A549 (cell line): ENCODE measurements at regions of chr1 and their contacts with region 1.

Region 1: DNA sequence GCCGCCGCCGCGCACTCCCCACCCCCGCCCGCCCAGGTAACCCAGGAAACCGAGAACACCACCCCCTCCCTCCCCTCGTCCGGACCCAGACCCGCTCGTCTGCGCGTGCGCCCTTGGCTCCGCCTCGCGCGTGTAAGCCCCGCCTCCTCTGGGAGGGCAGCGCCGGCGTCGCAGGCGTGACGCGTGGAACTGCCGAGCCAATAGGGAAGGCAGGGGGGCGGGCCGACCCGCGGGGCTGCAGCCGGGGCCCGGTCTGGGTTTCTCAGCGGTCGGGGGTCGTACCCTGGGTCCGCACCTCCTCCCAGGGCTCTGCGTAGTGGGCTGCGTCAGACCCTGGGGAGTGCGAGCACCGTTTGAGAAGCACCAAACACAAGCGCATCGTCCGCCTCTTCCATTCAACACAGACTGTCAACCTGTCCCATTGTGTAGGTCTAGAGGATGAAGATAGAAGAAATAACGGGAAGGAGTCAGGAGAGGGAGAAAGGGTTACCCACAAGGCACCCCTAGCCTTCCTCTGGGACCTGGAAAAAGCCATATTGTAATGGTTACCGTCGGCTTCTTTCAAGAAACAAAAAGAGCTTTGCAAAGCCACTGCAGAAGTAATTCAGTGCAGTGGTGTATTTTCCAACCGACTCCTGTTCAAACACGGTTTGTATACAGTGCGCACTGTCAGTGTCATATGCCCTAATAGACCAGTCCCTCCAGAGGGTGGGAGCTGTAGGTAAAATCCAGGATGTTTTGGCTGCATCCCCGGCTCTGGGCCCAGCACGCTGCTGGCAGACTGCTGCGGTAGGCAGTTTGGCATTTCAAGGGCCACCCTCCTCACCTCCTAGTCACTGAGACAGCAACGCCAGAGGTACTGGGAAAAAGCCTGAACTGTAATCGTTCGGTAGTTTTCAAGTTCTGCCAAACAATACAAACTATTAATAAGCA is 473 bp upstream of the LYST start:
- DNase-seq: peak; percentile 83 to 94
- ATAC-seq: peak; percentile 89 to 90
- H3K4me3 ChIP-seq: peak overlapping the region; percentile 92
- H3K27ac ChIP-seq: peak overlapping the region; percentile 85 to 95
- H3K4me1 ChIP-seq: peaks cover 10% of the 10 kb centered on the region; the same call in 2 of the 3 replicates
- CTCF ChIP-seq: no peak
- EP300 ChIP-seq: no peak
- POLR2A ChIP-seq: peak; percentile 90
- RAD21 ChIP-seq: no peak; a peak in 1 of 5 replicates

Region 2: GRCh38 chr1:235060607-235061470 is 806.3 kb before region 1 on chr1:
- CTCF ChIA-PET with region 1: no interaction called
- POLR2A ChIA-PET with region 1: no interaction called
- DNase-seq: no peak
- ATAC-seq: peak in 1 of 2 experiments; percentile 46; a peak in 3 of 6 replicates
- H3K4me3 ChIP-seq: no peak overlapping the region
- H3K27ac ChIP-seq: peak overlapping the region; percentile 45 to 76; a peak in 4 of 6 replicates
- H3K4me1 ChIP-seq: peaks cover 29% of the 10 kb centered on the region
- CTCF ChIP-seq: no peak
- EP300 ChIP-seq: no peak
- POLR2A ChIP-seq: no peak
- RAD21 ChIP-seq: no peak

Region 3: GRCh38 chr1:235878082-235878811 is 11.1 kb after region 1 on chr1:
- CTCF ChIA-PET with region 1: interaction called, 15 read pairs
- POLR2A ChIA-PET with region 1: no interaction called
- DNase-seq: no peak
- ATAC-seq: no peak
- H3K4me3 ChIP-seq: no peak overlapping the region
- H3K27ac ChIP-seq: no peak overlapping the region
- H3K4me1 ChIP-seq: peaks cover under 1% of the 10 kb centered on the region; the same call in 1 of the 3 replicates
- CTCF ChIP-seq: no peak
- EP300 ChIP-seq: no peak
- POLR2A ChIP-seq: no peak
- RAD21 ChIP-seq: no peak

Region 4: DNA sequence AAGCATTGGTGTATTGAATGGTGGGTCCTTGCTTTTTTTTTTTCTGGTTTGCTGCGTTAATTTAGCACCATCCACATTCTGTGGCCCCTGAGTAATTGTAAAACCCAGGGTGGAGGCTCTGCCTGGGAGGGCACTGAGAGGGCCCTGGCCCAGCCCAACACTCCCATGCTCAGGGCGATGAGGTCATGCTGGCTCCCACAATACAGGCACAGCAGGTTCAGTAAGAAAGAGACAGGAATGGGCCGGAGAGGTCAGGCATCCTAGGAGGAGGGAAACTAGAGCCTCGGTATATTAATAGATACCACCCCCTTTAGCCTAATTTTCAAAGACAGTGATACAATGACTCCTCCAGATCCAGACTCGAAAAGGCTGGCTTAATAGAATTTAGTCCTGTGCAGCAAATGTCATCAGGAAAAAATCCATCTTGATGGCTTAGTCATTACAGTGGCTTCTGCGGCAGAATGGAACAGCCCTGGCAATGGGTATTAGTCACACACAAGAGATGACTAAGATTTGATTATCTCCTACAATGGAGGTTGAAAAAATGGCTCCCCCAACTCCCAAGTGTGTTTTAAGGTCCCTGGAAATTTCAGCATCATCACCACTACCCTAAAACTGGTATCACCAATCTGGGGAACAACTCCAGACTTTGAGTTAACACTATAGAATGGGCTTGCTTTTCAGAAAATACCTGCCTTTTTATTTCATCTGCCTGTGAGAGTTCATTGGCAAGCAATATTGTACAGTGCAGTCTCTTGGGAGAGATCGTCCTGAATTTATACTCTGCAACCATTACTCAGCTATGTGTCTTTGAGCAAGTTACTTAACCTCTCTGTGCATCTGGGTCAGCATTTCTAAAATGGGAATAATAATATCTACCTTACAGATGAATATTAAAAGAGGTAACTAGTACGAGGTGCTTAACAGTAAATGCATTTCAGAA is 43.4 kb after region 1 on chr1:
- CTCF ChIA-PET with region 1: interaction called, 30 read pairs
- POLR2A ChIA-PET with region 1: interaction called, 3 read pairs
- DNase-seq: peak; percentile 90 to 94
- ATAC-seq: peak; percentile 95 to 96
- H3K4me3 ChIP-seq: no peak overlapping the region
- H3K27ac ChIP-seq: peak overlapping the region; percentile 77 to 90
- H3K4me1 ChIP-seq: peaks cover 56% of the 10 kb centered on the region
- CTCF ChIP-seq: no peak
- EP300 ChIP-seq: 0 out of 5 replicates have a peak, but pooled peaks of 1 of the 2 experiments have one; percentile 58
- POLR2A ChIP-seq: no peak
- RAD21 ChIP-seq: peak in 1 of 2 experiments; percentile 21; a peak in 1 of 5 replicates

Region 5: GRCh38 chr1:235933017-235933765 is 66.0 kb after region 1 on chr1:
- CTCF ChIA-PET with region 1: interaction called, 14 read pairs
- POLR2A ChIA-PET with region 1: interaction called, 4 read pairs
- DNase-seq: peak; percentile 27 to 31
- ATAC-seq: peak; percentile 83 to 84; a peak in 5 of 6 replicates
- H3K4me3 ChIP-seq: no peak overlapping the region
- H3K27ac ChIP-seq: peak overlapping the region in 1 of 2 experiments; percentile 56; a peak in 2 of 6 replicates
- H3K4me1 ChIP-seq: no peaks in the 10 kb centered on the region
- CTCF ChIP-seq: no peak
- EP300 ChIP-seq: no peak
- POLR2A ChIP-seq: no peak
- RAD21 ChIP-seq: peak; percentile 22 to 28; a peak in 1 of 5 replicates

Region 6: GRCh38 chr1:235946571-235946981 is 79.4 kb after region 1 on chr1:
- CTCF ChIA-PET with region 1: interaction called, 53 read pairs
- POLR2A ChIA-PET with region 1: no interaction called
- DNase-seq: no peak
- ATAC-seq: peak; percentile 51 to 76; a peak in 4 of 6 replicates
- H3K4me3 ChIP-seq: no peak overlapping the region
- H3K27ac ChIP-seq: no peak overlapping the region
- H3K4me1 ChIP-seq: no peaks in the 10 kb centered on the region
- CTCF ChIP-seq: peak; percentile 42
- EP300 ChIP-seq: no peak
- POLR2A ChIP-seq: no peak
- RAD21 ChIP-seq: peak; percentile 67 to 74

Region 7: GRCh38 chr1:235960809-235961208 is 93.6 kb after region 1 on chr1:
- CTCF ChIA-PET with region 1: interaction called, 23 read pairs
- POLR2A ChIA-PET with region 1: no interaction called
- DNase-seq: no peak
- ATAC-seq: no peak
- H3K4me3 ChIP-seq: no peak overlapping the region
- H3K27ac ChIP-seq: no peak overlapping the region
- H3K4me1 ChIP-seq: no peaks in the 10 kb centered on the region
- CTCF ChIP-seq: no peak
- EP300 ChIP-seq: no peak
- POLR2A ChIP-seq: no peak
- RAD21 ChIP-seq: no peak